ENCODE measurements at regions of chr4 and their contacts with region 1.

Region 1: GRCh38 chr4:48588230-48589097 is 98.4 kb downstream of the ZAR1 start:
- DNase-seq: no peak
- H3K4me3 ChIP-seq: no peak overlapping the region
- H3K27ac ChIP-seq: peak overlapping the region in 6 of 59 donors; percentile 8 to 48 (median 20)
- H3K27me3 ChIP-seq: no peaks in the 10 kb centered on the region
- CTCF ChIP-seq: no peak

Region 2: DNA sequence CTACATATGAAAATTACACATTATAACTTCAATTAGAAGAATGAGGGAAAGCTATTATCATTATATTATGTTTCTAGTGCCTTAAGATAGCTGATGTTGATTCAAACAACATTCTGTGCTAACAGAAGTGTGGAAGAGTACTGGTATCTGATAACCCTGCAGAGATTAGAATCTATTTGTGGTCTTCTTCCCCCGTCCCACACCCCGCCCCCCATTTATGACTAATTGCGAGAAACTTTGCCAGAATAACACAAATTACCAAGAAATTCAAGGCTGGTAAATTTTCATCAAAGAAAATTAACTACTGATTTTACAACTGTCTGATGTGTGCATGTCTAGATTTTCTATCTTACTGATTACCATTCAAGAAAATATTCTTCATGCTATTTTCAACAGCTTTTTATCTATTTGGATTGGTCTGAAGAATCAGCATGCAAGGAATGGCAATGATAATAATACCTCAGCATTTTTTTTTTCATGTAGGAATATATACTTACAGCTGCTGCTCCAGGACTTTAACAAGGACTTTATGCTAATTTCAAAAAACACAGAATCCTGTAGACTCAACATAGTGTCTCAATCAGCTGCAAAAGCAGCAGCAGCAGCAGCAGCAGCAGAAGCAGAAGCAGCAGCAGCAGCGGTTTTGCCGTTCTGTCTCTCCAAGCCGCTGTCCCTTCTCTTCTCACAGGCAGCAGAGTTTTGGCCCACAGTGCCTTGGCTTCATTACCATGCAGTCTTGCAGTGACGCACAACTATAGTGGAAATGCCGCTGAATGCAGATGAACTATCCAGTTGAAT is 65.0 kb after region 1 on chr4:
- intact Hi-C with region 1: loop called in 1 of 2 experiments (anchors 10 kb)
- DNase-seq: peak; percentile 47 to 90 (median 83)
- H3K4me3 ChIP-seq: peak overlapping the region; percentile 29 to 74 (median 51)
- H3K27ac ChIP-seq: peak overlapping the region; percentile 67 to 99 (median 88)
- H3K27me3 ChIP-seq: no peaks in the 10 kb centered on the region
- CTCF ChIP-seq: peak in 6 of 56 donors; percentile 15 to 29 (median 22)

Region 3: GRCh38 chr4:48830706-48831531 is 242.5 kb after region 1 on chr4 and contains the start of gene OCIAD1:
- intact Hi-C with region 1: loop called in 1 of 2 experiments (anchors 10 kb)
- DNase-seq: peak; percentile 96 to 99 (median 98)
- H3K4me3 ChIP-seq: peak within 1 kb of the TSS; percentile 63 to 99 (median 88)
- H3K27ac ChIP-seq: peak within 1 kb of the TSS; percentile 76 to 99 (median 94)
- H3K27me3 ChIP-seq: no peaks in the 10 kb centered on the region
- CTCF ChIP-seq: peak in 28 of 56 donors; percentile 6 to 44 (median 24)
- total RNA-seq, gene OCIAD1: 135 to 352 (median 263) TPM

Region 4: DNA sequence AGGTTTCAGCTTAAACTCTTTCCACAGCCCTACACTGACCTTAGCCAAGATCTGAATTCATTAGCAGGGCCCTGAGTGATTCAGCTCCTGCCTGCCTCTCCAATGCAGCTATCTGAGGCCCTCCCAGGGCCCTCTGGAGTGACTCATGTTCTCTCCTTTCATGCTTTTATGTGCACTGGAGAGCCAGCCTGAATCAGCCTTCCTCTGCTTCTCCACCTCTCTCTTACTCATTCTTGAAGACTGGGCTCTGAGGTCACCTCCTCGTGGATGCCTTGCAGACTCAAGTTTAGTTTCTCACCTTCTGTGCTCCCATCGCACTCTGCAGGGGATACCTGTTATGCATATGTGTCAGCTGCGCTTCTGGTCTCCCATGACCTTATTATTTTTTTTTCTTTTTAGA is 321.2 kb after region 1 on chr4:
- intact Hi-C with region 1: no loop called
- DNase-seq: peak in 5 of 10 donors; percentile 32 to 67 (median 56)
- H3K4me3 ChIP-seq: no peak overlapping the region
- H3K27ac ChIP-seq: peak overlapping the region in 2 of 59 donors; percentile 28 to 32
- H3K27me3 ChIP-seq: no peaks in the 10 kb centered on the region
- CTCF ChIP-seq: no peak

Measured in dorsolateral prefrontal cortex (tissue), 120 donors.